CD8-positive, alpha-beta T cell (primary cell): ENCODE measurements at regions of chr5 and their contacts with region 1.

Region 1: DNA sequence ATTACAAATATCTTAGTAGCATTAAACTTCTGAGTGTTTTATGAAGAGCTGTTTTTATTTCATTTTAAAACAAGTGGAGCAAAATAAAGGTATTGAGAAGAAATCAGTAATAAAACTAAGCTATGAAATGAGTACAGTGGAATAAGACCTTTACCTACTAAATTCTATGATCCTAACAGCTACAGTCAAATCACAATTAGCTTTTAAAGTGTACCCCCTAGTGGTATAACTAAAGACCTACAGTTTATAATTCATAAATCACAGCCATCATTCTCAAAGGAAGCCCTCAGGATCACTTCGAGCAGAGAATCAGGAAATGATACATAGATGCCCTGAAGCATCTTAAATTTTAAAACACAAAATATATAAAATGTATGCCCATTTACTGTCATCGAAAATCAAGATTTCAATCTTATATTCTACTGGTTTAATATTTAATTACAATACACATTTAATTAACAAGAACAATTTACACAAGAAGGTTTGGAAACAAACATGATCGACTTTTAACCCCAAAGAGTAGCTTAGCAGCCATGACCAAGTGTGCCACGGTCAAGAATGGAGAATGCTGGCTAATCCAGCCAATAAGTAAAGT is 12.3 kb downstream of the CCNH start:
- DNase-seq: peak in 2 of 9 experiments; percentile 45 to 63
- ATAC-seq: peak; percentile 86
- H3K4me3 ChIP-seq: no peak overlapping the region
- H3K4me3 Mint-ChIP-seq: no peak overlapping the region
- H3K27ac ChIP-seq: no peak overlapping the region
- H3K27ac Mint-ChIP-seq: no peak overlapping the region
- H3K4me1 ChIP-seq: peaks cover 11% of the 10 kb centered on the region
- H3K4me1 Mint-ChIP-seq: peaks cover 42% of the 10 kb centered on the region
- H3K27me3 ChIP-seq: no peaks in the 10 kb centered on the region
- H3K27me3 Mint-ChIP-seq: no peaks in the 10 kb centered on the region
- CTCF ChIP-seq: peak; percentile 78

Region 2: GRCh38 chr5:86880785-86881492 is 519.5 kb before region 1 on chr5:
- CTCF ChIA-PET with region 1: interaction called, 4 read pairs
- POLR2A ChIA-PET with region 1: no interaction called
- intact Hi-C with region 1: loop called in 1 of 2 experiments (anchors 1 kb)
- DNase-seq: peak in 7 of 9 experiments; percentile 1 to 60 (median 16)
- ATAC-seq: peak; percentile 66
- H3K4me3 ChIP-seq: no peak overlapping the region
- H3K4me3 Mint-ChIP-seq: no peak overlapping the region
- H3K27ac ChIP-seq: no peak overlapping the region
- H3K27ac Mint-ChIP-seq: no peak overlapping the region
- H3K4me1 ChIP-seq: no peaks in the 10 kb centered on the region
- H3K4me1 Mint-ChIP-seq: no peaks in the 10 kb centered on the region
- H3K27me3 ChIP-seq: no peaks in the 10 kb centered on the region
- H3K27me3 Mint-ChIP-seq: peaks cover 2% of the 10 kb centered on the region
- CTCF ChIP-seq: no peak

Region 3: GRCh38 chr5:86971034-86971571 is 429.3 kb before region 1 on chr5:
- CTCF ChIA-PET with region 1: no interaction called
- POLR2A ChIA-PET with region 1: no interaction called
- intact Hi-C with region 1: loop called in 1 of 2 experiments (anchors 1 kb)
- DNase-seq: peak in 2 of 9 experiments; percentile 23 to 32
- ATAC-seq: no peak
- H3K4me3 ChIP-seq: no peak overlapping the region
- H3K4me3 Mint-ChIP-seq: no peak overlapping the region
- H3K27ac ChIP-seq: no peak overlapping the region
- H3K27ac Mint-ChIP-seq: no peak overlapping the region
- H3K4me1 ChIP-seq: no peaks in the 10 kb centered on the region
- H3K4me1 Mint-ChIP-seq: peaks cover 2% of the 10 kb centered on the region
- H3K27me3 ChIP-seq: no peaks in the 10 kb centered on the region
- H3K27me3 Mint-ChIP-seq: peaks cover 10% of the 10 kb centered on the region
- CTCF ChIP-seq: peak; percentile 21

Region 4: DNA sequence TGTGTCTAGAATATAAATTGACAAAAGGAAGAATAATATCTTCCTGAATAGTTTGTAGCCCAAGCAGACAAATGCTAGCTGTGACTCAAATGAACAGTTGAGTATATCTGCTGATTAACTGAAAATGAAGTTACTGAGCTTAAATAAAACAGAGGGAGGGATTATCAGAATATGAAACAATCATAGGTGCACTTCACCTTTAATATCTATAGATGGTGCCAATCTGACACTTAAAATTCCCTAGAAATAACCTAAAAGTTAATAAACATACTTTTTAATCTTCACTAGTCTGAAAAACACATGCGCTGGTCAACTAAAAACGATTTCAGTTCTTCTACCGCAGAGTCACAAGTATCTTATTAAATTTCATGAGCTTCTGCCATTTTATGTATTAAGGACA is 413.6 kb before region 1 on chr5:
- CTCF ChIA-PET with region 1: interaction called, 5 read pairs
- POLR2A ChIA-PET with region 1: no interaction called
- intact Hi-C with region 1: loop called (anchors 1 to 5 kb)
- DNase-seq: peak in 1 of 9 experiments; percentile 6
- ATAC-seq: no peak
- H3K4me3 ChIP-seq: no peak overlapping the region
- H3K4me3 Mint-ChIP-seq: no peak overlapping the region
- H3K27ac ChIP-seq: no peak overlapping the region
- H3K27ac Mint-ChIP-seq: no peak overlapping the region
- H3K4me1 ChIP-seq: no peaks in the 10 kb centered on the region
- H3K4me1 Mint-ChIP-seq: no peaks in the 10 kb centered on the region
- H3K27me3 ChIP-seq: no peaks in the 10 kb centered on the region
- H3K27me3 Mint-ChIP-seq: no peaks in the 10 kb centered on the region
- CTCF ChIP-seq: peak; percentile 12

Region 5: GRCh38 chr5:87069974-87070624 is 330.3 kb before region 1 on chr5:
- CTCF ChIA-PET with region 1: interaction called, 8 read pairs
- POLR2A ChIA-PET with region 1: no interaction called
- intact Hi-C with region 1: loop called in 1 of 2 experiments (anchors 2 kb)
- DNase-seq: peak in 2 of 9 experiments; percentile 38 to 47
- ATAC-seq: no peak
- H3K4me3 ChIP-seq: no peak overlapping the region
- H3K4me3 Mint-ChIP-seq: no peak overlapping the region
- H3K27ac ChIP-seq: no peak overlapping the region
- H3K27ac Mint-ChIP-seq: no peak overlapping the region
- H3K4me1 ChIP-seq: peaks cover 12% of the 10 kb centered on the region
- H3K4me1 Mint-ChIP-seq: peaks cover 28% of the 10 kb centered on the region
- H3K27me3 ChIP-seq: no peaks in the 10 kb centered on the region
- H3K27me3 Mint-ChIP-seq: no peaks in the 10 kb centered on the region
- CTCF ChIP-seq: no peak